ENCODE measurements at regions of chr4 and their contacts with region 1.

Region 1: GRCh38 chr4:77358315-77358928 is 201.4 kb downstream of the CCNG2 start:
- DNase-seq: peak in 2 of 9 experiments; percentile 12 to 20
- ATAC-seq: no peak
- H3K4me3 ChIP-seq: no peak overlapping the region
- H3K4me3 Mint-ChIP-seq: no peak overlapping the region
- H3K27ac ChIP-seq: no peak overlapping the region
- H3K27ac Mint-ChIP-seq: no peak overlapping the region
- H3K4me1 ChIP-seq: no peaks in the 10 kb centered on the region
- H3K4me1 Mint-ChIP-seq: no peaks in the 10 kb centered on the region
- H3K27me3 ChIP-seq: no peaks in the 10 kb centered on the region
- H3K27me3 Mint-ChIP-seq: no peaks in the 10 kb centered on the region
- CTCF ChIP-seq: peak; percentile 24

Region 2: GRCh38 chr4:76430519-76431388 is 927.7 kb before region 1 on chr4:
- CTCF ChIA-PET with region 1: interaction called, 3 read pairs
- POLR2A ChIA-PET with region 1: no interaction called
- intact Hi-C with region 1: loop called in 1 of 2 experiments (anchors 5 kb)
- DNase-seq: peak in 2 of 9 experiments; percentile 52 to 61
- ATAC-seq: no peak
- H3K4me3 ChIP-seq: no peak overlapping the region
- H3K4me3 Mint-ChIP-seq: no peak overlapping the region
- H3K27ac ChIP-seq: no peak overlapping the region
- H3K27ac Mint-ChIP-seq: no peak overlapping the region
- H3K4me1 ChIP-seq: no peaks in the 10 kb centered on the region
- H3K4me1 Mint-ChIP-seq: no peaks in the 10 kb centered on the region
- H3K27me3 ChIP-seq: no peaks in the 10 kb centered on the region
- H3K27me3 Mint-ChIP-seq: peaks cover under 1% of the 10 kb centered on the region
- CTCF ChIP-seq: peak; percentile 67

Region 3: DNA sequence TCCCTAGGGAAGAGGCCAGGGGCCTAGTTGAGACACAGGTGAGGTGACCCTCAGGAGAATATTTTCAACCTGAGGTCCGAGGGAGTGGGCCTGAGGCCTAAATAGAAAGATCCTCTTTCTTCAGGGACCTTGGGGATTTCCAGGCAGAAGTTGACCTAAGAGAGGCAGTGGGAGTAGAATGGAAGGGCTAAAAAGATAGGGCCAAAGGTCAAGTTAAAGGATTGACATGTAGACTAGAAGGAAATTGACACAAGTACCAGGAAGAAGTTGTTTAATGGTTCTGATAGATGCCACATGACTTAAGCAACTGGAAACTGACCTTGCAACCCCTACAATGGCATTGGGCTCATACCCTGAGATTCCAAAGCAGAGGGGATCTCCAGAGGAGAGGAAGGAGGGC is 846.5 kb before region 1 on chr4:
- CTCF ChIA-PET with region 1: no interaction called
- POLR2A ChIA-PET with region 1: no interaction called
- intact Hi-C with region 1: loop called in 1 of 2 experiments (anchors 1 kb)
- DNase-seq: no peak
- ATAC-seq: no peak
- H3K4me3 ChIP-seq: no peak overlapping the region
- H3K4me3 Mint-ChIP-seq: no peak overlapping the region
- H3K27ac ChIP-seq: no peak overlapping the region
- H3K27ac Mint-ChIP-seq: no peak overlapping the region
- H3K4me1 ChIP-seq: no peaks in the 10 kb centered on the region
- H3K4me1 Mint-ChIP-seq: no peaks in the 10 kb centered on the region
- H3K27me3 ChIP-seq: no peaks in the 10 kb centered on the region
- H3K27me3 Mint-ChIP-seq: no peaks in the 10 kb centered on the region
- CTCF ChIP-seq: no peak

Region 4: GRCh38 chr4:77235289-77235854 is 123.0 kb before region 1 on chr4:
- CTCF ChIA-PET with region 1: interaction called, 6 read pairs
- POLR2A ChIA-PET with region 1: no interaction called
- intact Hi-C with region 1: loop called (anchors 5 kb)
- DNase-seq: no peak
- ATAC-seq: no peak
- H3K4me3 ChIP-seq: no peak overlapping the region
- H3K4me3 Mint-ChIP-seq: no peak overlapping the region
- H3K27ac ChIP-seq: no peak overlapping the region
- H3K27ac Mint-ChIP-seq: no peak overlapping the region
- H3K4me1 ChIP-seq: no peaks in the 10 kb centered on the region
- H3K4me1 Mint-ChIP-seq: no peaks in the 10 kb centered on the region
- H3K27me3 ChIP-seq: no peaks in the 10 kb centered on the region
- H3K27me3 Mint-ChIP-seq: peaks cover 8% of the 10 kb centered on the region
- CTCF ChIP-seq: no peak

Region 5: DNA sequence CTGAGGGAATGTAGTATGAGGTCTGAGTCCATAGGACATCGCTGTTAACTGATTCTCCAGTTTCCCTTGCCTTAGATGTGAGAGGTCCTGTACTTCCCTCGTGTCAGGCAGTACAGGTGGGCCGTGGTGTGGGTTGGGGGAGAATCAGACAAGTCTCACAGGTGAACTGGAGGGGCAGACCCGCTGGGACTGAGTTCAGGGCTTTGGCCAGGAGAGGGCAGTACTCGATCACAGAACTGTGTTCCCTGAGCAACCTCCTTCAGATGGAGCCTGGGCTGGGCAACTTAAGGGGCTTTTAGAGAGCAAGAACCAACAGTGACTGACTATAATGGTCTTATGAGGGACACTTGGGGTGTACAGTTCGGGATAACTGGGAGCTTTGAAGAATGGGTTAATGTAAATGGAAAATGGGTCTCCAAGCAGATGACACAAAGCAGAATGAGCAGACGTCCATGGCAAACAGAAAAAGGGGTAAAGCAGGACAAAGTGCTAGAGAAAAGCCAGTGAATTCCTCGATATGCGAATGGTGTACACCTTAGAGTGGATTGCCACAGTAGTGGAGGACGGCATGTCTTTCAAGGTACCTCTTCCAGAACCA is 117.9 kb before region 1 on chr4:
- CTCF ChIA-PET with region 1: interaction called, 6 read pairs
- POLR2A ChIA-PET with region 1: no interaction called
- intact Hi-C with region 1: loop called (anchors 5 kb)
- DNase-seq: peak; percentile 7 to 63 (median 43)
- ATAC-seq: no peak
- H3K4me3 ChIP-seq: no peak overlapping the region
- H3K4me3 Mint-ChIP-seq: no peak overlapping the region
- H3K27ac ChIP-seq: no peak overlapping the region
- H3K27ac Mint-ChIP-seq: no peak overlapping the region
- H3K4me1 ChIP-seq: no peaks in the 10 kb centered on the region
- H3K4me1 Mint-ChIP-seq: no peaks in the 10 kb centered on the region
- H3K27me3 ChIP-seq: no peaks in the 10 kb centered on the region
- H3K27me3 Mint-ChIP-seq: peaks cover 5% of the 10 kb centered on the region
- CTCF ChIP-seq: peak; percentile 21

Region 6: DNA sequence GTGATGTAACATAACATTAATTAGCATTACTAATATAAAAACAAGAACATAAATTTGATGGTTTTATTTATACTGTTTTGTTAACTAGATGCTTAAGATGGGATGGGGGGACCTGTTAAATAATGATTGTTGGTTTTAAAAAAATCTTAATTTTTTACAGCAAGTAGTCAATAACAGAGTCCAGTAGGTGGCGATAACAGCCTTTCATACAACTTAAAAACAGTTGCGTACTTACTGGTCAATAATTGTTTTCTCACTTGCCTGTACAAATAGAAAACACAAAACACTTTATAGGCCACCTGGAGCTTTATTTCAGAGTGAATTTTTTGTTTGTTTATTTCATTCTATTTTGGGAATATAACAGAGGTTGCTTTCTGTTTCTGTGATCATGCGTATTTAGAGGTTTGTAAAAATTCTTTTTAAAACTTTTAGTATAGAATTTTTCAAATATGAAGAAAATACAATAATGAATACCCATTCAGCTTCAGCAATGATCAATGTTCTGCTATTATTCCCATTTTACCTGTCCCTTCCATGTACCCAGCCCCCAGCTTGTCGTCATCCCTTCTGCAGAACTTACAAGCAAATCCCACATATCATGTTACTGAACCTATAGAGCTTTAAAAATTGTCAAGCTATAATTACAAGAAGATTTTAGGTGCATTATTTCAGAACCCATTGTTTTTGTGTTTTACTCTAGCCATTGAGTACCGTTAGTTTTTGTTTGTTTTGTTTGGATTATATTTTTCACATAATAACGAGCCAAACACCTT is 601.3 kb after region 1 on chr4:
- CTCF ChIA-PET with region 1: no interaction called
- POLR2A ChIA-PET with region 1: no interaction called
- intact Hi-C with region 1: no loop called
- DNase-seq: peak in 2 of 9 experiments; percentile 42 to 59
- ATAC-seq: no peak
- H3K4me3 ChIP-seq: no peak overlapping the region
- H3K4me3 Mint-ChIP-seq: no peak overlapping the region
- H3K27ac ChIP-seq: no peak overlapping the region
- H3K27ac Mint-ChIP-seq: no peak overlapping the region
- H3K4me1 ChIP-seq: no peaks in the 10 kb centered on the region
- H3K4me1 Mint-ChIP-seq: peaks cover 5% of the 10 kb centered on the region
- H3K27me3 ChIP-seq: no peaks in the 10 kb centered on the region
- H3K27me3 Mint-ChIP-seq: no peaks in the 10 kb centered on the region
- CTCF ChIP-seq: peak; percentile 87

Region 7: DNA sequence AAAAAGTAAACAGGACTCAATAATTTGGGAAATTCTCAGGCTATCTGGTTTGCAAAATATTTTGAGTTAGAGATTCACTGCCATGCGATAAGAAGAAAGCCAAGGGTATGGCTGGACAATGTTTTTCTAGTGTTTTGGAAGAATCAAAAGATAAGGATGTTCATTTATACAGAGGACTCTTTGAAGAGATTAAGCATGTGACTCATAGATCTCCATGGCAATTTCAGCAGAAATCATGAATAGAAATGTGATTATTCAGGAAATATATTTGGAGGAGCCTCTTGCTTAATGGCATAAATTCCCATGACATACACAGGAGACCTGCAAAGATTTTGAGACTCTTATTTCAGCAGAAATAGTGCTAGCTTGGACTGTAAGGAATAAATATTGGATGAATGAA is 682.0 kb after region 1 on chr4:
- CTCF ChIA-PET with region 1: no interaction called
- POLR2A ChIA-PET with region 1: no interaction called
- intact Hi-C with region 1: no loop called
- DNase-seq: no peak
- ATAC-seq: no peak
- H3K4me3 ChIP-seq: no peak overlapping the region
- H3K4me3 Mint-ChIP-seq: no peak overlapping the region
- H3K27ac ChIP-seq: no peak overlapping the region
- H3K27ac Mint-ChIP-seq: no peak overlapping the region
- H3K4me1 ChIP-seq: no peaks in the 10 kb centered on the region
- H3K4me1 Mint-ChIP-seq: no peaks in the 10 kb centered on the region
- H3K27me3 ChIP-seq: peaks cover 0 to 3% of the 10 kb centered on the region in 2 experiments
- H3K27me3 Mint-ChIP-seq: peaks cover 2% of the 10 kb centered on the region
- CTCF ChIP-seq: no peak

Measured in CD8-positive, alpha-beta T cell (primary cell).